ENCODE measurements at regions of chr11 and their contacts with region 1.

Region 1: GRCh38 chr11:62601394-62602140 is at the start of gene MTA2:
- DNase-seq: peak; percentile 99
- H3K4me3 Mint-ChIP-seq: peak within 1 kb of the TSS; percentile 85
- H3K27ac Mint-ChIP-seq: peak within 1 kb of the TSS; percentile 95
- H3K4me1 Mint-ChIP-seq: peaks cover 55% of the 10 kb centered on the region
- H3K27me3 Mint-ChIP-seq: no peaks in the 10 kb centered on the region
- total RNA-seq, gene MTA2: 270 to 299 TPM

Region 2: GRCh38 chr11:62612366-62613290 is 11.1 kb after region 1 on chr11 and contains the starts of genes EML3 and ROM1:
- CTCF ChIA-PET with region 1: interaction called, 25 read pairs
- POLR2A ChIA-PET with region 1: no interaction called
- DNase-seq: peak; percentile 90
- H3K4me3 Mint-ChIP-seq: peak within 1 kb of the TSS; percentile 96
- H3K27ac Mint-ChIP-seq: peak within 1 kb of the TSS; percentile 94
- H3K4me1 Mint-ChIP-seq: peaks cover 54% of the 10 kb centered on the region
- H3K27me3 Mint-ChIP-seq: no peaks in the 10 kb centered on the region
- total RNA-seq, gene EML3: 137 to 144 TPM
- total RNA-seq, gene ROM1: 1.0 to 1.3 TPM